GM12878 (cell line): ENCODE measurements at regions of chr15 and their contacts with region 1.

Region 1: DNA sequence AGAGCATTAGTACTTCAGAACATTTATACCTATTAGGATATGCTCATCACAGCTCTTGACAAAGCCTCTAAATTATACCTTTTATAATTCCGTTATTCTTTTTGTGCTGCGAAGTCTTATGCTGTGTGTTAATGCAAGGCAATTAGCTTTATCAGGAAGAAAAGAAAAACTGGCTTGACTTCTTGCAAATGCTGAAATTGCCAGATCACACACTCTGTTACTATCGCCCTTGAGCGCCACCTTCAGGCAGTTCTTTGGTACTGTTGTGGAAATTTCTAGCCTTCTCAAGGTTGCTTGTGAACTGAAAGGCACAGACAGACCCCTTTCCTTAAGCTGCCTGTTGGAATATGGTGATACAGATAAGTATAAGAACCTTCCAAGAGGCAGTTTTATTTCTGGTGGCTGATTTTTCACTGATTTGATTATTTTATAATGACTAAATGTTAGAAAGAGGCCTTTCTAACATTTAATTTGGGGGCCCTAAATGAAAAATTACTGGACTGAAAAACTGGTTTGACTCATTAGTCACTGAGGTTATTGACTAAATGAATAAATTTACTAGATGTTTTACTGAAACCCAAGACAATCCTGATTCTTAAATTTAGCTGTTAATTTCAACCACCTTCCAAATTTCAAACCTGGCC is 126.2 kb upstream of the RASGRP1 start:
- DNase-seq: no peak
- ATAC-seq: peak; percentile 68
- H3K4me3 ChIP-seq: no peak overlapping the region
- H3K27ac ChIP-seq: peak overlapping the region; percentile 27; the same call in 1 of the 2 replicates
- H3K4me1 ChIP-seq: peaks cover 28% of the 10 kb centered on the region
- H3K27me3 ChIP-seq: no peaks in the 10 kb centered on the region
- CTCF ChIP-seq: peak; percentile 85 to 89 (median 87); a peak in 5 of 6 replicates
- EP300 ChIP-seq: no peak
- POLR2A ChIP-seq: no peak
- RAD21 ChIP-seq: peak; percentile 79

Region 2: GRCh38 chr15:38440353-38441129 is 250.3 kb before region 1 on chr15:
- CTCF ChIA-PET with region 1: interaction called, 386 read pairs
- POLR2A ChIA-PET with region 1: interaction called, 16 read pairs
- RAD21 ChIA-PET with region 1: interaction called, 224 read pairs
- SMC1A ChIA-PET with region 1: interaction called, 212 read pairs
- in situ Hi-C with region 1: loop called (anchors 10 kb)
- intact Hi-C with region 1: loop called (anchors 2 kb)
- DNase-seq: peak; percentile 44
- ATAC-seq: peak; percentile 92
- H3K4me3 ChIP-seq: no peak overlapping the region
- H3K27ac ChIP-seq: no peak overlapping the region
- H3K4me1 ChIP-seq: peaks cover 8% of the 10 kb centered on the region
- H3K27me3 ChIP-seq: peaks cover 0 to 3% of the 10 kb centered on the region in 2 experiments; a peak in 2 of 4 replicates
- CTCF ChIP-seq: peak; percentile 90 to 94 (median 91)
- EP300 ChIP-seq: no peak
- POLR2A ChIP-seq: no peak
- RAD21 ChIP-seq: peak; percentile 96

Region 3: GRCh38 chr15:38479266-38479665 is 211.5 kb before region 1 on chr15:
- CTCF ChIA-PET with region 1: interaction called, 219 read pairs
- POLR2A ChIA-PET with region 1: interaction called, 8 read pairs
- RAD21 ChIA-PET with region 1: interaction called, 148 read pairs
- SMC1A ChIA-PET with region 1: interaction called, 138 read pairs
- in situ Hi-C with region 1: no loop called
- intact Hi-C with region 1: loop called (anchors 2 kb)
- DNase-seq: no peak
- ATAC-seq: no peak
- H3K4me3 ChIP-seq: no peak overlapping the region
- H3K27ac ChIP-seq: no peak overlapping the region
- H3K4me1 ChIP-seq: no peaks in the 10 kb centered on the region
- H3K27me3 ChIP-seq: no peaks in the 10 kb centered on the region
- CTCF ChIP-seq: no peak
- EP300 ChIP-seq: no peak
- POLR2A ChIP-seq: no peak
- RAD21 ChIP-seq: no peak

Region 4: GRCh38 chr15:38514601-38515000 is 176.2 kb before region 1 on chr15:
- CTCF ChIA-PET with region 1: interaction called, 41 read pairs
- POLR2A ChIA-PET with region 1: interaction called, 3 read pairs
- RAD21 ChIA-PET with region 1: interaction called, 8 read pairs
- SMC1A ChIA-PET with region 1: interaction called, 208 read pairs
- in situ Hi-C with region 1: no loop called
- intact Hi-C with region 1: no loop called
- DNase-seq: peak; percentile 74
- ATAC-seq: peak; percentile 77
- H3K4me3 ChIP-seq: no peak overlapping the region
- H3K27ac ChIP-seq: 0 out of 2 replicates have a peak overlapping the region, but pooled peaks have one; percentile 8
- H3K4me1 ChIP-seq: peaks cover 7% of the 10 kb centered on the region
- H3K27me3 ChIP-seq: no peaks in the 10 kb centered on the region
- CTCF ChIP-seq: no peak
- EP300 ChIP-seq: no peak
- POLR2A ChIP-seq: no peak
- RAD21 ChIP-seq: no peak

Region 5: DNA sequence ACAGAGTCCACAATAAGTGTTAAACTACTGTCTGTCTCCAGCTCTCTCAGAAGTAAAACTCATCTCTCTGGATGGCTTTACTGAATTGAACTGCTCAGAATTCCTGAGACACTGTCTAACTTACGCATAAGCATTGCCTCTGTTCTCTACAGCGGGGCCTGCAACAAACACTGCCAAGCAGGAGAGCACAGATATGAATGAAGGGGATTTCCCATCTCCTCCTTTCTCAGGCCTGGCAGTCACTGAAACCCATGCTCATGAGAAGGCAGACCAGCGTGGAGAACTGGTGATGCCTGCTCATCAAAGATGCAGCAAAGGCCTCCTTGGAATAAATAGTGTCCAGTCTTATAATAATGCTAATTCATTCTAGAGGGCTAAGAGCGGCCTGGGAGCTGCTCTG is 136.5 kb before region 1 on chr15:
- CTCF ChIA-PET with region 1: interaction called, 276 read pairs
- POLR2A ChIA-PET with region 1: interaction called, 5 read pairs
- RAD21 ChIA-PET with region 1: interaction called, 248 read pairs
- SMC1A ChIA-PET with region 1: interaction called, 293 read pairs
- in situ Hi-C with region 1: no loop called
- intact Hi-C with region 1: no loop called
- DNase-seq: no peak
- ATAC-seq: peak; percentile 80
- H3K4me3 ChIP-seq: no peak overlapping the region
- H3K27ac ChIP-seq: peak overlapping the region; percentile 59; the same call in 1 of the 2 replicates
- H3K4me1 ChIP-seq: peaks cover 45% of the 10 kb centered on the region
- H3K27me3 ChIP-seq: no peaks in the 10 kb centered on the region
- CTCF ChIP-seq: no peak
- EP300 ChIP-seq: no peak
- POLR2A ChIP-seq: no peak
- RAD21 ChIP-seq: no peak

Region 6: DNA sequence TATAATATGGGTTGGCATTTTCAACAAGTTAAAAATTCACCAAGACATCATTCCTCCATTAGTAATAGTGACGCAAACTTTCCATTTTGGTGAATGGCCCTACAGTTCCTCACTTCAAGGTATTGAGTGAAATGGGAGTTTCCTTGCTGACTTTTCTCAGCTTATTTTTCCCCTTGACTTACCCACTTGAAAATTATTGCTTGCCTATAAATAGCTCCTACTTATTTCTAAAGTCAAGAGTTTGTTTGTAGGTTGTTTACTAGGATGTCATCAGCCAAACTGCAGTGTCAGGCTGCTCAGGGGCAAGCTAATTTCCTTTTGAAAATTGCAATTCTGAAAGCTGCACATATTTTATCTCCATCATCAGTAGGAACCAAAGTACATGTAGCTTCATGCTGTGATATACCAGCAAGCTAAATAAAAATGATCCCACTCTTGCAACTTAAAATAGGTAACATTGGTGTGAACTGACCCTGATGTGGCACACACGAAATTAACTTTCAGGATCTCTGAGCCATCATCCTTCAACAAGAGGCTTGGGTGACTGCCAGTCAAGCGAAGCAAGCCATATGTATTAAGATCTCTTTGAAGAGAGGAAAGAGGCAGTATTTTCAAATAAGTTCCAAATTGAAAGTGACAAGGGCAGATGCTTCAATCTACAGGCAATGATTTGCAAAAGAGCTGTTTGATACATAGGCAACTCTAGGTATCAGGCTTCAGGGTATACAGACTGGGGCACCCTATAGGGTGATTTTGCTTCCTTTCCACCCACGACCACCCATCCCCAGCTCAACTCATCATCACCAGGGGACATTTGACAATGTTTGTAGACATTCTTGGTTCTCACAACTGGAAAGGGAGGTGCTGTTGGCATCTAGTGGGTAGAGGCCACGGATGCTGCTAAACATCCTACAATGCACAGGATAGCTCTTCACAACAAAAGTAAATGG is 59.4 kb before region 1 on chr15:
- CTCF ChIA-PET with region 1: interaction called, 52 read pairs
- POLR2A ChIA-PET with region 1: interaction called, 13 read pairs
- RAD21 ChIA-PET with region 1: interaction called, 322 read pairs
- SMC1A ChIA-PET with region 1: interaction called, 154 read pairs
- in situ Hi-C with region 1: no loop called
- intact Hi-C with region 1: no loop called
- DNase-seq: no peak
- ATAC-seq: peak; percentile 77
- H3K4me3 ChIP-seq: no peak overlapping the region
- H3K27ac ChIP-seq: no peak overlapping the region; the same call in 1 of the 2 replicates
- H3K4me1 ChIP-seq: no peaks in the 10 kb centered on the region
- H3K27me3 ChIP-seq: no peaks in the 10 kb centered on the region
- CTCF ChIP-seq: no peak
- EP300 ChIP-seq: no peak; a peak in 2 of 4 replicates
- POLR2A ChIP-seq: no peak
- RAD21 ChIP-seq: no peak

Region 7: DNA sequence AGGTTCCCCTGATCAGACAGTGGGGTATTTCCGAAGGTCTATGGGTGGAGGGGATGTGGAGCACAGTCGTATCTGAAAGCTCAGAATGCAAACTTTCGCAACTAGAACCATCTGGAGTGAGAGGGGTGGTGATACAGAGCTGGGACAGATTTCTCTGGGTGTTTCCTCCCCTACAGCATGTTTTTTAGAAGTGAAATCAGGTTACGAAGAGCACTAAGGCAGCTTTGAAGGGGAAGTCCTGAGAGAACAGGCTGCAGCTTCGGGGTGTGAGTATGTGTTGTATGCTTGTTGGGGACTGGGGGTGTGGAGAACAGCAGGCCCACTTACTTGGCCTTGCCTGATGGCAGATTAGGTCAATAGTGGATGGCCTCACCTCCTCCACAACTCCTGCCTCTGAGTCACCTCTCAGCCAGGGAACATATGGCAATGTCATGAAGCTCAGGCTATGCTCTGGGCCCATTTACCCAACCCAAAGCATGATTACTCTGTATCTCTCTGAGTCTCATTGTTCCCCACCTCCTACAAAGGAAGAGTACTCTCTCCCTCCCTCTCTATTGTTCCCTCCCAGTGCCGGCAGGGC is 19.0 kb before region 1 on chr15:
- CTCF ChIA-PET with region 1: interaction called, 173 read pairs
- POLR2A ChIA-PET with region 1: interaction called, 45 read pairs
- RAD21 ChIA-PET with region 1: interaction called, 134 read pairs
- SMC1A ChIA-PET with region 1: interaction called, 225 read pairs
- in situ Hi-C with region 1: no loop called
- intact Hi-C with region 1: no loop called
- DNase-seq: peak; percentile 91
- ATAC-seq: peak; percentile 76
- H3K4me3 ChIP-seq: no peak overlapping the region
- H3K27ac ChIP-seq: peak overlapping the region; percentile 77
- H3K4me1 ChIP-seq: peaks cover 56% of the 10 kb centered on the region
- H3K27me3 ChIP-seq: no peaks in the 10 kb centered on the region
- CTCF ChIP-seq: no peak
- EP300 ChIP-seq: peak in 1 of 2 experiments; percentile 7; a peak in 2 of 4 replicates
- POLR2A ChIP-seq: peak; percentile 61
- RAD21 ChIP-seq: no peak; the same call in 1 of the 2 replicates

Region 8: GRCh38 chr15:38750791-38751190 is 60.0 kb after region 1 on chr15:
- CTCF ChIA-PET with region 1: no interaction called
- POLR2A ChIA-PET with region 1: no interaction called
- RAD21 ChIA-PET with region 1: no interaction called
- SMC1A ChIA-PET with region 1: no interaction called
- in situ Hi-C with region 1: no loop called
- intact Hi-C with region 1: no loop called
- DNase-seq: no peak
- ATAC-seq: no peak
- H3K4me3 ChIP-seq: no peak overlapping the region
- H3K27ac ChIP-seq: no peak overlapping the region
- H3K4me1 ChIP-seq: no peaks in the 10 kb centered on the region
- H3K27me3 ChIP-seq: no peaks in the 10 kb centered on the region; a peak in 2 of 4 replicates
- CTCF ChIP-seq: no peak
- EP300 ChIP-seq: no peak
- POLR2A ChIP-seq: no peak
- RAD21 ChIP-seq: no peak

Region 9: GRCh38 chr15:38930851-38931537 is 240.2 kb after region 1 on chr15:
- CTCF ChIA-PET with region 1: no interaction called
- POLR2A ChIA-PET with region 1: no interaction called
- RAD21 ChIA-PET with region 1: no interaction called
- SMC1A ChIA-PET with region 1: no interaction called
- in situ Hi-C with region 1: no loop called
- intact Hi-C with region 1: no loop called
- DNase-seq: no peak
- ATAC-seq: no peak
- H3K4me3 ChIP-seq: no peak overlapping the region
- H3K27ac ChIP-seq: no peak overlapping the region
- H3K4me1 ChIP-seq: no peaks in the 10 kb centered on the region
- H3K27me3 ChIP-seq: no peaks in the 10 kb centered on the region
- CTCF ChIP-seq: no peak
- EP300 ChIP-seq: no peak
- POLR2A ChIP-seq: no peak
- RAD21 ChIP-seq: no peak

Region 10: DNA sequence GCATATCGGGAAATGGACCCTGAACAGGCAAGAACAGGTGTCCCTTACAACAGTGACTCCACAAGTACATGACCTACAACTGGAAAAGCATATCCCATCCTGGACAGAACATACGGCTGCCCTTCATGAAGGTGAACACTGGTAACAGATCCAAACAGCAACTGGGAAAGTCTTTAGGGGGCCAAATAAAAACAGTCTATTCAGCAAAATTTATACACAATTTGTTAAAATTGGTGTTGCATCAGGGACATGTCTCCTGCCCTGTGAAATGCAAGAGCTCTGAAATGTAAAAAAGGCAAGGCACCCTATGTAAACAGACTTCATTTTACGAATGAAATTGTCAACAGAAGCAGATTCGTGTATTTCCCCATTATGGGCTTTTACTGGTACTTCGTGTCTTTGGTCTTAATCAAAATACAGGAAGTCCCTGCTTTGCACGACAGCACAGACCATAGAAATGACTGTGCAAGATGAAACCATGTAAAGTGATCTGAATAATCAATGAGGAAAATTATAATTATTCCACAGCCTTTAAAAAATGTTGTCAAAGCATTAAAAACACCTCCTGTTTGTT is 762.8 kb after region 1 on chr15:
- CTCF ChIA-PET with region 1: no interaction called
- POLR2A ChIA-PET with region 1: no interaction called
- RAD21 ChIA-PET with region 1: no interaction called
- SMC1A ChIA-PET with region 1: no interaction called
- in situ Hi-C with region 1: no loop called
- intact Hi-C with region 1: no loop called
- DNase-seq: peak; percentile 31
- ATAC-seq: peak; percentile 93
- H3K4me3 ChIP-seq: no peak overlapping the region
- H3K27ac ChIP-seq: peak overlapping the region; percentile 46; the same call in 1 of the 2 replicates
- H3K4me1 ChIP-seq: peaks cover 5% of the 10 kb centered on the region; the same call in 1 of the 2 replicates
- H3K27me3 ChIP-seq: no peaks in the 10 kb centered on the region
- CTCF ChIP-seq: no peak
- EP300 ChIP-seq: peak; percentile 76 to 81; a peak in 3 of 4 replicates
- POLR2A ChIP-seq: no peak
- RAD21 ChIP-seq: no peak